ENCODE measurements at regions of chr7 and their contacts with region 1.

Region 1: GRCh38 chr7:7681179-7681935 is 37.0 kb downstream of the RPA3 start:
- DNase-seq: peak; percentile 48
- H3K4me3 ChIP-seq: no peak overlapping the region
- H3K27ac ChIP-seq: peak overlapping the region in 1 of 2 experiments; percentile 90; a peak in 2 of 4 replicates
- H3K4me1 ChIP-seq: peaks cover 0 to 12% of the 10 kb centered on the region in 2 experiments; a peak in 2 of 4 replicates
- H3K27me3 ChIP-seq: no peaks in the 10 kb centered on the region
- CTCF ChIP-seq: peak; percentile 93
- EP300 ChIP-seq: no peak
- RAD21 ChIP-seq: peak; percentile 93

Region 2: GRCh38 chr7:7369134-7369533 is 312.2 kb before region 1 on chr7:
- CTCF ChIA-PET with region 1: no interaction called
- POLR2A ChIA-PET with region 1: no interaction called
- DNase-seq: no peak
- H3K4me3 ChIP-seq: no peak overlapping the region
- H3K27ac ChIP-seq: no peak overlapping the region
- H3K4me1 ChIP-seq: peaks cover 0 to 2% of the 10 kb centered on the region in 2 experiments; a peak in 1 of 4 replicates
- H3K27me3 ChIP-seq: no peaks in the 10 kb centered on the region
- CTCF ChIP-seq: no peak
- EP300 ChIP-seq: no peak
- RAD21 ChIP-seq: no peak

Region 3: GRCh38 chr7:7542251-7542835 is 139.0 kb before region 1 on chr7:
- CTCF ChIA-PET with region 1: no interaction called
- POLR2A ChIA-PET with region 1: no interaction called
- DNase-seq: no peak
- H3K4me3 ChIP-seq: no peak overlapping the region
- H3K27ac ChIP-seq: no peak overlapping the region
- H3K4me1 ChIP-seq: no peaks in the 10 kb centered on the region
- H3K27me3 ChIP-seq: no peaks in the 10 kb centered on the region
- CTCF ChIP-seq: no peak
- EP300 ChIP-seq: no peak
- RAD21 ChIP-seq: no peak

Region 4: DNA sequence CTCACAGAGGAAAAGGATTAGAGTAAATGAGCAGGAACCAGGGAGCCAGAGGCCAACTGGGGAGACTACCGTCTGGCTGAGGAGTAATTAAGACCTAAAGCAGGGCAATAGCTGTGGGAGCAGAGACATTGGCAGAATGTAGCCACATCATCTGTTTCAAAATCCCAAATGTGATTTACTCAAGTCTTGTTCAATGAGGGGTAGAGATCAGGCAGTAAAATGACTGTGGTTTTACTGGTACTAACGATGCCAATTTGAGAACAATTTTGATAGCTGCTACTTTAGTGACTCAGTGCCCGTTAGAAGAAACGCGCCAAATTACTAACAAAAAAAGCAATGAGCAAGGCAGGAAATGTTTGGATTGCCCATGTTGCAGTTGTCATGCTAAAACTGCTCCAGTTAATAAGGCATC is 127.3 kb before region 1 on chr7:
- CTCF ChIA-PET with region 1: no interaction called
- POLR2A ChIA-PET with region 1: no interaction called
- DNase-seq: no peak
- H3K4me3 ChIP-seq: no peak overlapping the region
- H3K27ac ChIP-seq: peak overlapping the region in 1 of 2 experiments; percentile 25; a peak in 2 of 4 replicates
- H3K4me1 ChIP-seq: peaks cover 7 to 15% of the 10 kb centered on the region in 2 experiments; a peak in 2 of 4 replicates
- H3K27me3 ChIP-seq: no peaks in the 10 kb centered on the region
- CTCF ChIP-seq: no peak
- EP300 ChIP-seq: no peak
- RAD21 ChIP-seq: no peak

Region 5: GRCh38 chr7:7581531-7582179 is 99.7 kb before region 1 on chr7:
- CTCF ChIA-PET with region 1: interaction called, 11 read pairs
- POLR2A ChIA-PET with region 1: no interaction called
- DNase-seq: no peak
- H3K4me3 ChIP-seq: no peak overlapping the region
- H3K27ac ChIP-seq: no peak overlapping the region; a peak in 1 of 4 replicates
- H3K4me1 ChIP-seq: peaks cover 0 to 24% of the 10 kb centered on the region in 2 experiments; a peak in 1 of 4 replicates
- H3K27me3 ChIP-seq: no peaks in the 10 kb centered on the region
- CTCF ChIP-seq: no peak
- EP300 ChIP-seq: no peak
- RAD21 ChIP-seq: no peak

Region 6: GRCh38 chr7:7662527-7662926 is 18.8 kb before region 1 on chr7:
- CTCF ChIA-PET with region 1: interaction called, 21 read pairs
- POLR2A ChIA-PET with region 1: no interaction called
- DNase-seq: no peak
- H3K4me3 ChIP-seq: no peak overlapping the region; a peak in 1 of 4 replicates
- H3K27ac ChIP-seq: peak overlapping the region in 1 of 2 experiments; percentile 31; a peak in 1 of 4 replicates
- H3K4me1 ChIP-seq: peaks cover 0 to 3% of the 10 kb centered on the region in 2 experiments; a peak in 2 of 4 replicates
- H3K27me3 ChIP-seq: no peaks in the 10 kb centered on the region
- CTCF ChIP-seq: peak; percentile 58
- EP300 ChIP-seq: no peak
- RAD21 ChIP-seq: peak; percentile 72

Region 7: GRCh38 chr7:7719236-7719635 is 37.9 kb after region 1 on chr7:
- CTCF ChIA-PET with region 1: interaction called, 12 read pairs
- POLR2A ChIA-PET with region 1: no interaction called
- DNase-seq: peak; percentile 47
- H3K4me3 ChIP-seq: no peak overlapping the region; a peak in 1 of 4 replicates
- H3K27ac ChIP-seq: peak overlapping the region; percentile 11 to 83; a peak in 3 of 4 replicates
- H3K4me1 ChIP-seq: peaks cover 10 to 23% of the 10 kb centered on the region in 2 experiments; a peak in 3 of 4 replicates
- H3K27me3 ChIP-seq: no peaks in the 10 kb centered on the region
- CTCF ChIP-seq: no peak
- EP300 ChIP-seq: peak in 1 of 2 experiments; percentile 21; a peak in 1 of 4 replicates
- RAD21 ChIP-seq: 0 out of 2 replicates have a peak, but pooled peaks have one; percentile 5

Region 8: GRCh38 chr7:7769715-7770627 is 88.6 kb after region 1 on chr7:
- CTCF ChIA-PET with region 1: interaction called, 17 read pairs
- POLR2A ChIA-PET with region 1: no interaction called
- DNase-seq: no peak
- H3K4me3 ChIP-seq: no peak overlapping the region
- H3K27ac ChIP-seq: peak overlapping the region in 1 of 2 experiments; percentile 70; a peak in 2 of 4 replicates
- H3K4me1 ChIP-seq: peaks cover 0 to 37% of the 10 kb centered on the region in 2 experiments; a peak in 2 of 4 replicates
- H3K27me3 ChIP-seq: no peaks in the 10 kb centered on the region
- CTCF ChIP-seq: no peak
- EP300 ChIP-seq: no peak
- RAD21 ChIP-seq: no peak

Region 9: GRCh38 chr7:8217200-8218068 is 536.1 kb after region 1 on chr7:
- CTCF ChIA-PET with region 1: interaction called, 19 read pairs
- POLR2A ChIA-PET with region 1: no interaction called
- DNase-seq: peak; percentile 28
- H3K4me3 ChIP-seq: no peak overlapping the region; a peak in 1 of 4 replicates
- H3K27ac ChIP-seq: peak overlapping the region in 1 of 2 experiments; percentile 93; a peak in 2 of 4 replicates
- H3K4me1 ChIP-seq: peaks cover 0 to 67% of the 10 kb centered on the region in 2 experiments; a peak in 2 of 4 replicates
- H3K27me3 ChIP-seq: no peaks in the 10 kb centered on the region
- CTCF ChIP-seq: peak; percentile 90
- EP300 ChIP-seq: no peak
- RAD21 ChIP-seq: peak; percentile 89

Region 10: GRCh38 chr7:8261711-8262695 is 580.6 kb after region 1 on chr7 and contains the start of gene ICA1:
- CTCF ChIA-PET with region 1: no interaction called
- POLR2A ChIA-PET with region 1: no interaction called
- DNase-seq: peak; percentile 90
- H3K4me3 ChIP-seq: peak within 1 kb of the TSS; percentile 63 to 71
- H3K27ac ChIP-seq: peak within 1 kb of the TSS in 1 of 2 experiments; percentile 100; a peak in 3 of 4 replicates
- H3K4me1 ChIP-seq: peaks cover 0 to 21% of the 10 kb centered on the region in 2 experiments; a peak in 2 of 4 replicates
- H3K27me3 ChIP-seq: peaks cover 14% of the 10 kb centered on the region; the same call in 1 of the 2 replicates
- CTCF ChIP-seq: no peak
- EP300 ChIP-seq: no peak
- RAD21 ChIP-seq: no peak
- polyA plus RNA-seq, gene ICA1: 2.4 and 5.4 TPM in 2 replicates